PC-3 (cell line): ENCODE measurements at regions of chr7 and their contacts with region 1.

Region 1: GRCh38 chr7:12490117-12490688 is 80.3 kb upstream of the SCIN start:
- DNase-seq: peak; percentile 66
- ATAC-seq: peak; percentile 21; the same call in 1 of the 2 replicates
- H3K4me3 ChIP-seq: no peak overlapping the region
- H3K27ac ChIP-seq: no peak overlapping the region
- H3K4me1 ChIP-seq: peaks cover 41% of the 10 kb centered on the region
- H3K27me3 ChIP-seq: no peaks in the 10 kb centered on the region
- CTCF ChIP-seq: peak; percentile 77

Region 2: DNA sequence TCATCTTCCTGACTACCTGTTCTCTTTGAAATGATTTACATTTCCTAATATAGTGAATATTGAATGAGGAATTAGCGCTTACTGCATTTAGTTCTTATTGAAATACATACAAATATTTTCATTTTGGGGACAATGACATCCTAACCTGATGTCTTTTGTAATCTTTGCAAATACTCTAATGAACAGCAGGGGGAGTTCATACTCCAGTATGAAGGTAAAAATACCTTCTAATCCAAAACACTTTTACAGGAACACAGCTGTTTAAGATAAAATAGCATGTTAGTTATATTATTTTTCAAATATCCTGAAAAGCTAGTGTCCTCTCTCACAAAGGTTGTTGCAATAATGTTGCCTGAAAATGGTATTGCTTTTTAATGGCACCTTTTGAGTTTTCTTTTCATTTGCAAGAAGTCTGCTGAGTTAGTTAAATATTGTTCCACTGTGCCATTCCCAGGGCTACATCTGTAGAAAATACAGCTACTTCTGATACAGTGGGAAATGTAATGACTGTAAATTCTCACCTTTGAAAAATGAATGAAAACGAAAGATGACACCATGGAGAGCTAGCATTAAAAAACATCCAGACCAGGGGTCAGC is 1116.6 kb before region 1 on chr7:
- CTCF ChIA-PET with region 1: no interaction called
- POLR2A ChIA-PET with region 1: no interaction called
- intact Hi-C with region 1: loop called (anchors 10 kb)
- DNase-seq: peak; percentile 54
- ATAC-seq: peak; percentile 62; the same call in 1 of the 2 replicates
- H3K4me3 ChIP-seq: no peak overlapping the region
- H3K27ac ChIP-seq: no peak overlapping the region
- H3K4me1 ChIP-seq: no peaks in the 10 kb centered on the region
- H3K27me3 ChIP-seq: 0 out of 2 replicates have a peak, but pooled peaks cover 12% of the 10 kb centered on the region
- CTCF ChIP-seq: peak; percentile 75

Region 3: DNA sequence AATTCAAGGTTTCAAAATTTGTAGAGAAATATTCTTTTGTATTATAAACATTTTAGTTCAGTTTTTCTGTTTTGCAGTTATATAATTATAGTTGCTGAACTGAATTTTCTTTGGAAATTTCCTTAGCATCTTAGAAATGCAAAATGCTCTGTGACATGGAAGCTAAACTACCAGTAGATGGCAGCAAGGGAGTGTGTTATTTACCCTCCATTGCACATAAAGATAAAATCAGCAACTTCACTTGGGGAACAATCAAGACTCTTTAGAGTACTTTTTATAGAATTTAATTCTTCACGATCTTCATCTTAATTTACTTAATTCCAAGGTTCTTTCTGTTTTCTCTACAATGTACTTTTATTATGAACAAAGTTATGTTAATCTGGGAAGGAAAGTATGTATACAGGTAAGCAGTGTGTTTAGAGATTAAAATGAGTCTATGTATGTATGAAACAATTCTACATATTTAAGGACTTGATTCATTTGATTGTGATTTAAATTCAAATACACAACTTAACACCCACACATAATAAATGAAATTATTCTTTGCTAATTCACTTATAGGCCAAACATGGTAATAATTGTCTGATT is 1062.4 kb before region 1 on chr7:
- CTCF ChIA-PET with region 1: interaction called, 3 read pairs
- POLR2A ChIA-PET with region 1: no interaction called
- intact Hi-C with region 1: loop called (anchors 5 kb)
- DNase-seq: peak; percentile 74
- ATAC-seq: peak; percentile 62
- H3K4me3 ChIP-seq: no peak overlapping the region
- H3K27ac ChIP-seq: no peak overlapping the region
- H3K4me1 ChIP-seq: no peaks in the 10 kb centered on the region
- H3K27me3 ChIP-seq: no peaks in the 10 kb centered on the region
- CTCF ChIP-seq: peak; percentile 87

Region 4: DNA sequence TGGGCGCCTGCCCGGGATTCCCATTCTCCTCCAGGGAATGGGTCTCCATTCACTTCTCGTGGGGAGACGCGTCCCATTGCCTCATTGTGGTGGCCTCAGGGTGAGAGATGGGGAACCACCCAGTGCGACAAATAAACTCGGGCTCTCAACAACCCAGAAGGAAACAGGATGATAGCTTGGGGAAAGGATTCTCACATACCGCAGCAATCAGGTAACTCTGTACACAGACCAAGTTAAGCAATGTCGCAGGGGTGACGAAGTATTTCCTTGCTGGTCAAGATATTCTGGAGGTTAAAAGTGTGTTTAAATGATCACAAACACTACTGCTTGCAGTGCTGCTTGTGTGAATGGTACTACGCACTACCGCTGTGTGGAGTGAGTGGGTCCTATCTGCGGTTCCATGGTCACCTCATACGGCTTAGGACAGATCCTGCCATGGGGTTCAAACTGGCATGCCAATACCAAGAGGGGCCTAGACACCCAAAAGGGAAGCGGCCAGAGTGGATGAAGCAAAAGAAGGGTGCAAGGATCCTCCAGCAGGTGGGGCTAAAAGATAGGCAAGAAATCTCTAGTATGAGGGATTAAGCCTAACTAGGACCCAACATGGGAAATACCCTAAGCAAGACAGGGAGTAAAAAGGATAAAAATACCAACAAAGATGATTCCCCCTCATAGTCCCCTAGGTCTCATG is 422.9 kb before region 1 on chr7:
- CTCF ChIA-PET with region 1: interaction called, 4 read pairs
- POLR2A ChIA-PET with region 1: no interaction called
- intact Hi-C with region 1: loop called (anchors 1 kb)
- DNase-seq: peak; percentile 83
- ATAC-seq: peak; percentile 50
- H3K4me3 ChIP-seq: peak overlapping the region; percentile 58
- H3K27ac ChIP-seq: peak overlapping the region; percentile 100
- H3K4me1 ChIP-seq: peaks cover 29% of the 10 kb centered on the region
- H3K27me3 ChIP-seq: no peaks in the 10 kb centered on the region
- CTCF ChIP-seq: peak; percentile 86

Region 5: DNA sequence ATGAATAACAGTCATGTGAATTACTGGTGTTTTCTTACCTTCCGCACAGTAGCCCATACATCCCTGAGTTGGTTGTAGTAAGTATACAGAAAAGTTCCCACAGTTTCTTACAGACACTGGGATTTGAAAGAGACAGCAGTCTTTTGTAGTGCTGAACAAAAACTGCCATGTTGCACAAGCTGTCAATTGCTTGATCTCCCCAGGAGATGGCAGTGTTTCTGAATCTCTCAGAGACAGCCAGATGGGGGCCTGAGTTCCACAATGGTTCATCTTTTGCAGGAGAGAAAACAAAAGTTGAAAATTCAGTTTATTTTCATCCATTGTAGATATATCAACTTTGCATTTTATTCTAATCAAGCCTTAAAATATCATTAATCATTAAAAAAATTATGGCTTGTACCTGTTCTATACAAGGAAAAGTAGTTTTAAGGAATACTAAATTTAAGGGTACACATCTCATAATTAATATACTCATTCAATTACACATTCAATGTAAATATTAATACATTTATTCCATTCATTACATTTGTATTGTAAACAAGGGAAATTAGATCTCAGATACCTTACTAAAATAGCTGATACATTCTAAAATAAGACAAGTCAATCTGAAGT is 101.0 kb before region 1 on chr7:
- CTCF ChIA-PET with region 1: interaction called, 4 read pairs
- POLR2A ChIA-PET with region 1: no interaction called
- intact Hi-C with region 1: loop called (anchors 1 kb)
- DNase-seq: peak; percentile 77
- ATAC-seq: peak; percentile 89
- H3K4me3 ChIP-seq: no peak overlapping the region
- H3K27ac ChIP-seq: no peak overlapping the region
- H3K4me1 ChIP-seq: no peaks in the 10 kb centered on the region
- H3K27me3 ChIP-seq: no peaks in the 10 kb centered on the region
- CTCF ChIP-seq: peak; percentile 91

Region 6: DNA sequence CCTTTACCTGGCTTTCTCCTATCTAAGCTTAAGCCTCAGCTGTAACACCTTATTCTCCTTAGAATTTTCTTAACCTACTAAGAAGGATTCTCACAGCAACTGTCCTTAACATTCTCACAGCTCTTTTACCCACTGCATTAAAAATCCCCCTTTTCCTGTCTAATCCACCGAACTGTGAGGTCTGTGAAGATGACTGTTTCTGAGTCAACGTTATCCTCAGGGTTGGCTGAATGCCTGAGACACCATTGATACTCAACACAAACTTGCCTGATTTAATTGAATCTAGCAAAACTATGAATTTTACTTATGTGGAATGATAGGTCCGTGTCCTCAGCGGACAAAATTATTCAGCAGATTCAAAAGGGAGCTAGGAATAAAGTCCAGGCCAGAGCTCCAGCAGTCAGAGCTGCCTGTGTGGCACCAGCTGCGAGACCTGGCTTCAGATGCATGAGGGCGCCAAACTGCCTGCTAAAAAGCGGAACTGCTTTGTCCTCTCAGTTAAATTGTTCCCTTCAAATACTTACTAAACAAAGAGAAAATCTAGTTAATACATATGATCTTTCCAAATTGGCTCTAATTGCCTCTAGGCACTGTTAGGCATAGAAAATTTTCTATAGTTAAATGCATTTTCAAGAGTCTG is 53.2 kb before region 1 on chr7:
- CTCF ChIA-PET with region 1: interaction called, 7 read pairs
- POLR2A ChIA-PET with region 1: no interaction called
- intact Hi-C with region 1: loop called (anchors 1 kb)
- DNase-seq: peak; percentile 68
- ATAC-seq: peak; percentile 70
- H3K4me3 ChIP-seq: no peak overlapping the region
- H3K27ac ChIP-seq: peak overlapping the region; percentile 78
- H3K4me1 ChIP-seq: peaks cover 14% of the 10 kb centered on the region
- H3K27me3 ChIP-seq: no peaks in the 10 kb centered on the region
- CTCF ChIP-seq: peak; percentile 55

Region 7: DNA sequence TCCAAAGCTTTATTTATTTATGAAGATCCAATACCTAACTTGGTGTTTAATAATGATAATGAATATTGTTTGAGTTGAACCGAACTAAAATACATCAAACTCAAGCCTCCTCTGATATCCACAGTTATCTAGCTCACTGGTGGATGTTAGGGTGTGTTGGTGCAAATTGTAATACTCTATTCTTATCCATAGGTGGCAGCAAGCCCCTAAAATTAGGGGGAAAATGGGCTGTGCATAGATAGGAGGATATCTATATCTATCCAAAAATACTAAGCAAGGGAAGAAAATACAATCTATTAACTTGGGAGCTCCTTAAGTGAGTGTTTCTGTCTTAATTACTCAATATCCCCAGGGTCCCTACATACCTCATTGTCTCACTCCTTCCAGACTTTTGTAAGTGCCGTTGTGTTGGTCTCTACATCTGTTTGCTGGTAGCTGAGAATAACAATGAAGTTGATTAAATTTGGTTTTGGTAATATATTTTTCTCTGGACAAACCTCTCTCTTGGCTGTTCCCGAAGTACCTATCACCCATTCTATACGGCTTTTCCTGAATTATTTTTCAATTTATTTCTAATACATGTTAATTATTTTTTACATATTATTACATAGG is 31.6 kb before region 1 on chr7:
- CTCF ChIA-PET with region 1: interaction called, 73 read pairs
- POLR2A ChIA-PET with region 1: no interaction called
- intact Hi-C with region 1: loop called (anchors 1 kb)
- DNase-seq: peak; percentile 77
- ATAC-seq: peak; percentile 100
- H3K4me3 ChIP-seq: no peak overlapping the region
- H3K27ac ChIP-seq: no peak overlapping the region
- H3K4me1 ChIP-seq: no peaks in the 10 kb centered on the region
- H3K27me3 ChIP-seq: no peaks in the 10 kb centered on the region
- CTCF ChIP-seq: peak; percentile 88

Region 8: DNA sequence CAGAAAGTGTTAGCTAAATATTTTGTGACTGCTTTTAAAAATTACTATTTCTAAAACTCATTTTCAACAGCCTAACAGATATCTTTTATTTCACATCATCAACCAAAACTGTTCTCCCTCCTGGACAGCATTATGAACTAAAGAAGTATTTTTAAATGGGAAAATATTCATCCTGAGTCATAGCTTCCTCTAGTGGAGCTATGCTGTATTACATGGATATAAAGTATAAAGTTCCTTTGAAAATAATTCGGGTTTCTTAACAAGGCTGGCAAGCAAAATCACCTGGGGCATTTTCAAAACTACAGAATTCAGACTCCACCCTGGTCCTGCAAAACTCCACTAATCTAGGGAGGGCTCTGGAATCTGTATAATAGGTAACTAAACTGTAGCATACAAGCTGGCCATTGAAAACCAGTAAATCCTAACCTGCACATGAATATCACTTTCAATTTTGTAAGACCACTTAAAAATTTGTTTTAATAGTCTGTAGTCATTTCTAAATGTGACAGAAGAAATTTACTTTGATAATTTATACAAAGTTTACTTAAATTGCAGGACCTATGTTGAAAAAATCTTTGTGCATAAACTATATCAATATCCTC is 133.8 kb after region 1 on chr7:
- CTCF ChIA-PET with region 1: no interaction called
- POLR2A ChIA-PET with region 1: no interaction called
- intact Hi-C with region 1: no loop called
- DNase-seq: peak; percentile 74
- ATAC-seq: peak; percentile 45
- H3K4me3 ChIP-seq: peak overlapping the region; percentile 39; the same call in 1 of the 2 replicates
- H3K27ac ChIP-seq: no peak overlapping the region
- H3K4me1 ChIP-seq: peaks cover 6% of the 10 kb centered on the region; the same call in 1 of the 2 replicates
- H3K27me3 ChIP-seq: no peaks in the 10 kb centered on the region
- CTCF ChIP-seq: peak; percentile 88

Region 9: GRCh38 chr7:12907774-12908173 is 417.6 kb after region 1 on chr7:
- CTCF ChIA-PET with region 1: no interaction called
- POLR2A ChIA-PET with region 1: no interaction called
- intact Hi-C with region 1: no loop called
- DNase-seq: no peak
- ATAC-seq: no peak
- H3K4me3 ChIP-seq: no peak overlapping the region
- H3K27ac ChIP-seq: no peak overlapping the region
- H3K4me1 ChIP-seq: no peaks in the 10 kb centered on the region
- H3K27me3 ChIP-seq: no peaks in the 10 kb centered on the region
- CTCF ChIP-seq: no peak